ENCODE measurements at regions of chr12 and their contacts with region 1.

Region 1: GRCh38 chr12:48542300-48542928 is 17.0 kb downstream of the OR8S1 start:
- DNase-seq: peak; percentile 42
- CTCF ChIP-seq: peak; percentile 54

Region 2: GRCh38 chr12:48527891-48528675 is 14.3 kb before region 1 on chr12:
- CTCF ChIA-PET with region 1: interaction called, 18 read pairs
- POLR2A ChIA-PET with region 1: no interaction called
- DNase-seq: no peak
- CTCF ChIP-seq: no peak

Region 3: GRCh38 chr12:48631057-48631456 is 88.6 kb after region 1 on chr12:
- CTCF ChIA-PET with region 1: no interaction called
- POLR2A ChIA-PET with region 1: no interaction called
- DNase-seq: no peak
- CTCF ChIP-seq: no peak

Region 4: GRCh38 chr12:48651681-48652080 is 109.3 kb after region 1 on chr12:
- CTCF ChIA-PET with region 1: no interaction called
- POLR2A ChIA-PET with region 1: no interaction called
- DNase-seq: no peak
- CTCF ChIP-seq: no peak